Adrenal gland (tissue), 19 donors: ENCODE measurements at regions of chr5 and their contacts with region 1.

Region 1: GRCh38 chr5:177454397-177455035 is 7.9 kb downstream of the PRR7 start:
- DNase-seq: peak; percentile 88 to 96 (median 93)
- H3K4me3 ChIP-seq: peak overlapping the region in 2 of 4 donors; percentile 8 to 71
- H3K27ac ChIP-seq: peak overlapping the region in 2 of 5 donors; percentile 61 to 74
- H3K4me1 ChIP-seq: peaks cover 14 to 29% of the 10 kb centered on the region in 2 donors
- H3K27me3 ChIP-seq: no peaks in the 10 kb centered on the region
- CTCF ChIP-seq: peak; percentile 72 to 98 (median 86)
- POLR2A ChIP-seq: no peak

Region 2: GRCh38 chr5:177124486-177124991 is 330.0 kb before region 1 on chr5:
- intact Hi-C with region 1: no loop called
- DNase-seq: no peak
- H3K4me3 ChIP-seq: no peak overlapping the region
- H3K27ac ChIP-seq: no peak overlapping the region
- H3K4me1 ChIP-seq: no peaks in the 10 kb centered on the region
- H3K27me3 ChIP-seq: no peaks in the 10 kb centered on the region
- CTCF ChIP-seq: no peak
- POLR2A ChIP-seq: no peak

Region 3: DNA sequence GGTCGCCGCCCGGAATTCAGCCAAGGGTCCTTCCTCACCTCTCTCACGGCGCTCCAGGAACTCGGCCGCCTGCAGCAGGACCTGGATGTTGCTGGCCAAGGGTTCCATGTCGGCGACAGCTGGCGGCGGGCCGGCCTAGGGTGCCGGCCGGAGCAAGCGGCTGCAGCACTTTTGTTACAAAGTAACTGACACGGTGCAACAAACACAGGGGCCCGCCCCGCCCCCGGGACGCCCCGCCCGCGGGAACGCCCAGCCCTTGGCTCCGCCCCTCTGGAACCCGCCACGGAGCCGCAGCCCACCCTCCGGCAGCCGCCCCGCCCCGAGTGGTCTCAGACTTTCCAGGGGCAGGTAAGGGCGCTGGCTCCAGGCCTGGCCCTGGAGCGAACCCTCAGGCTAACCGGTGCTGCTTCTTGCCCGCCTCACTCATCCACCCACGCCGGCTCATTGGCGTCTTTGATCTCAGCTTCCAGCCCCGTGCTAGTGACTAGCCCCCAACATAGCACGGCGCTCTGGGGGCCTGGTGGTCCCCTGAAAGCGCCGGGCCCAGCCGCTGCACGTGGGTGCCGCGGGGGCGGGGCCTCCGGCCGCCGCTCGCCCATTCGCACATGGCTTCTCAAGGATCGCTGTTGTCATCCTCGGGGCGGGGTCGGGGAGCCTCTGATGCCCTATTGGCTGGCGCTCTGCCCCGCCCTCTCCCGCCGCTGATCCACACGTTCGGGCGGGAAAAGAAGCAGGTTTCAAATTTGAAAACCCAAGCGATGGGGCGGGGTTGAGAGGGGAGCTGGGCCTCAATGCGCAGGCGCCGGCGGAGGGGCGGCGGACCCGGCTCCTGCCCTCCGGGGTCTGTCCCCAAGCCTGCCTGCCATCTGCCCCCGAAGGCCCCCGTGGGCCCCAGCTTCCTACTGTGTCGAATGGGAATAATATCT is 142.5 kb before region 1 on chr5 and contains the start of gene MXD3:
- intact Hi-C with region 1: loop called (anchors 5 to 10 kb)
- DNase-seq: peak; percentile 95 to 99 (median 98)
- H3K4me3 ChIP-seq: peak within 1 kb of the TSS in 2 of 4 donors; percentile 16 to 60
- H3K27ac ChIP-seq: peak within 1 kb of the TSS in 1 of 5 donors; percentile 69
- H3K4me1 ChIP-seq: peaks cover 12 to 19% of the 10 kb centered on the region in 2 donors
- H3K27me3 ChIP-seq: no peaks in the 10 kb centered on the region
- CTCF ChIP-seq: no peak
- POLR2A ChIP-seq: no peak
- total RNA-seq, gene MXD3: 0.85 to 18.1 (median 3.5) TPM

Region 4: GRCh38 chr5:177317959-177318377 is 136.5 kb before region 1 on chr5:
- intact Hi-C with region 1: loop called (anchors 5 to 10 kb)
- DNase-seq: peak; percentile 73 to 92 (median 85)
- H3K4me3 ChIP-seq: no peak overlapping the region
- H3K27ac ChIP-seq: no peak overlapping the region
- H3K4me1 ChIP-seq: peaks cover 0 to under 1% of the 10 kb centered on the region in 2 donors
- H3K27me3 ChIP-seq: no peaks in the 10 kb centered on the region
- CTCF ChIP-seq: peak; percentile 80 to 87 (median 85)
- POLR2A ChIP-seq: no peak

Region 5: DNA sequence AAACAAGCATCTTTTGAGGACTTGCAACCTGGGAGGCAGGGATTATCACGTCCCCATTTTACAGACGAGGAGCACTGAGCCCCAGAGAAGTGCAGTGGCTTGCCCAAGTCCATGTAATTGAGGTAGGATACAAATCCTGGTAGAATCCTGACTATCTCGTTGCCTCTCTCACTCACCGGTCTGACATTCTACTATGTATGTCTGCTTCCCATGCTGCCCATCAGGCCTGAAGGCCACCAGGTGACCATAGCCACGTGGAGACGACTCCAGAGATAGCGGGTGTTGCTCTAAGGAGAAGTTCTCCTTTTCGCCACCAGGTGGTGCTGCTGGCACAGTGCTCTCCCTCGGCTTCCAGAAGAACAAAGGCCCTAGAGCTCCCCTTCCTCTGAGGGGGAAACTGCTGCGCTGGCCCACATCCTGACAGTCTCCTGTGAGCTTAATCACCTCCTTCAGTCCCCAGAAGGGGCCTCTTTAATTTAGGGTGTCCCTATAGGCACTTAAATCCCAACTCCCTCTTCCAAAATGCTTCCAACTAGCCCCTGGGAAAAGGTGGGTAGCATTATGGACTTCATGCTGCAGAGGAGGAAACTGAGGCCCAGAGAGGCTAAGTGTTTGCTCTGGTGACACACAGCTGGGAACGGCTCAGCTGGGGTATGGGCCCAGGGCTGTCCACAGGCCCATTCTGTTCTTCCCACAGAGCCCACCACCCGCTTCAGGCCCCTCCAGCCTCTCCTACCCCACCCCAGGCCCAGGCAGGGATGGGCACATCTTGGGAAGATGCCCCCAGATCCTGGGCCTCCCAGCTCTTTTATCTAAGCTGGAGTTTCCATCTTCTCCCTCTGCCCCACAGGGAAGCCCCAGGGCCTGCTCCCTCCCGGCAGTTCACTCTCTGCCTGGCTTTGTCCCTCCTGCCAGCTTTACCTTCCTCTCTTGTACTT is 63.9 kb before region 1 on chr5:
- intact Hi-C with region 1: loop called (anchors 5 kb)
- DNase-seq: peak; percentile 72 to 94 (median 85)
- H3K4me3 ChIP-seq: no peak overlapping the region
- H3K27ac ChIP-seq: no peak overlapping the region
- H3K4me1 ChIP-seq: no peaks in the 10 kb centered on the region
- H3K27me3 ChIP-seq: peaks cover 3% of the 10 kb centered on the region
- CTCF ChIP-seq: peak; percentile 96 to 99 (median 97)
- POLR2A ChIP-seq: no peak

Region 6: DNA sequence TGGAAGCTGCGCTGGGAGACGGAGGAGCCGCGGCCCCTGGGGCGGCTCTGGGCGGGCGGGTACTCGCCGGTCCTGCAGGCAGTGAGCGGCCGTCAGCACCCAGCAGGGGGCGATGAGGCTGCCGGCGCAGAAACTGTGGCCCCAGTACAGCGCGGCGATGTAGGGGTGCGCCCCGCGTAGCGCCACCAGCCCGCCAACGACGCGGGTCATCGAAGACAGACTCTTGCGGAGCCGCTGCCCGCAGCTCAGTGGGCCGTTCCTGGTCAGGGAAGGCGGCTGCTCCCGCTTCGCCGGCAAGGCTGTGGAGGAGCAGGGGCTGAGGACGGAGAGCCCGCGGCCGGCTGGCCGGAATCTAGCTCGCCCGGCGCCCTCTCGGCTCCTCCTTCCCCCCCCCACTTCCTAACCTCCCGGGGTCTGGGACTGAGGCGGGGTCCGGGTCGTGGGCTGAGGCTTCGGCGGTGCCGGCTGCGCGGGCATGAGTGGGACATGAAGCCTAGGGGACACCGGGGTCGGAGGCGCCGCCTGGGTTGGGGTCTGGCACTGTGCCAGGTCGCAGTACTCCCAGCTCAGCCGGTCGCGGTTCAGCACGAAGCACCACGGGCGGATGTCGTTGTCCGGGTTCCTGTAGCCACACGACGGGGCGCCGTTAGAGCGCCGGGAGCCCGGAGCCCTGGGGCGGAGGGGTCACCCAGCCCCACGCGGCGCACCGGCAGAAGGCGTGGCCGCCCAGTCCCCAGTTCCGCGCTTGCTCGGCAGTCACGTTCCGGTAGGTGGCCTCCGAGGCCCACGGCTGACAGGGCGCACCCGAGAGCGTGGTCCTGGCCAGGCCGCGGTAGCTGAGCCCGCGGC is 50.5 kb before region 1 on chr5:
- intact Hi-C with region 1: loop called in 1 of 2 experiments (anchors 2 kb)
- DNase-seq: peak; percentile 81 to 93 (median 87)
- H3K4me3 ChIP-seq: peak overlapping the region in 2 of 4 donors; percentile 5 to 54
- H3K27ac ChIP-seq: no peak overlapping the region
- H3K4me1 ChIP-seq: peaks cover 13 to 27% of the 10 kb centered on the region in 2 donors
- H3K27me3 ChIP-seq: peaks cover 50% of the 10 kb centered on the region
- CTCF ChIP-seq: peak; percentile 41 to 90 (median 68)
- POLR2A ChIP-seq: no peak

Region 7: GRCh38 chr5:177500685-177501522 is 46.4 kb after region 1 on chr5:
- intact Hi-C with region 1: loop called (anchors 5 kb)
- DNase-seq: peak; percentile 85 to 96 (median 93)
- H3K4me3 ChIP-seq: no peak overlapping the region
- H3K27ac ChIP-seq: no peak overlapping the region
- H3K4me1 ChIP-seq: peaks cover 17 to 18% of the 10 kb centered on the region in 2 donors
- H3K27me3 ChIP-seq: no peaks in the 10 kb centered on the region
- CTCF ChIP-seq: peak; percentile 86 to 95 (median 94)
- POLR2A ChIP-seq: no peak